AG04449 (cell line): ENCODE measurements at regions of chr16 and their contacts with region 1.

Region 1: GRCh38 chr16:67816240-67817031 is 9.7 kb downstream of the TSNAXIP1 start:
- DNase-seq: no peak
- H3K4me3 ChIP-seq: no peak overlapping the region
- CTCF ChIP-seq: peak; percentile 99

Region 2: GRCh38 chr16:67672739-67673662 is 143.4 kb before region 1 on chr16:
- CTCF ChIA-PET with region 1: interaction called, 28 read pairs
- POLR2A ChIA-PET with region 1: no interaction called
- DNase-seq: peak; percentile 14
- H3K4me3 ChIP-seq: no peak overlapping the region
- CTCF ChIP-seq: peak; percentile 72

Region 3: DNA sequence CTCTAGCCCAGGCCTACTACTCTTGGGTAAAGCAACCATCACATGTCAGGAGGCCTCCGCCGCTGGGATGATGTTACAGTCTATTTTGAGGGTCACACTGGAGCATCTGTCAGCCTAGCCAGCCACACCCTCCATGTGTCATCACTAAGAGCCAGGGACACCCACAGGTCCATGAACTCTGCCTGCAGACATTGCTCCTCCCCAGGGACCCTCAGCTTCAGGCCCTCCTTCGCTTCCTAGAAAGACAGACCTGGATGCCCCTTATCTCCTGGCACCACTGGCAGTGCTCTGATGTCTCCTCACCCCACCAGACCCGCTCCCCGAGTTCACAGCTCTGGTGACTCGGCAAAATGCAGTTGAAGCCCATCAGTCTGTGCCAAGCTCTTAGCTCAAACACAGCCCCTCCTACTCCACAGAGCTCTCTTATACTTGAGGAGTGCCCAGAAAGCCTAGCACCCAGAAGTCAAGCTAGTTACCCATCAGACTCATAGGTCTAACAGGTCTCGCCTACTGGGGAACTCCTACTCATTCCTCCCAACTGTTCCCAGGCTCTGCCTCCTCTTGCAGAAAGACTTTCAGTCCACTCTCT is 16.0 kb before region 1 on chr16:
- CTCF ChIA-PET with region 1: interaction called, 21 read pairs
- POLR2A ChIA-PET with region 1: no interaction called
- DNase-seq: no peak
- H3K4me3 ChIP-seq: no peak overlapping the region
- CTCF ChIP-seq: no peak

Region 4: GRCh38 chr16:67865316-67865715 is 48.9 kb after region 1 on chr16:
- CTCF ChIA-PET with region 1: interaction called, 61 read pairs
- POLR2A ChIA-PET with region 1: no interaction called
- DNase-seq: no peak
- H3K4me3 ChIP-seq: no peak overlapping the region
- CTCF ChIP-seq: peak; percentile 49

Region 5: DNA sequence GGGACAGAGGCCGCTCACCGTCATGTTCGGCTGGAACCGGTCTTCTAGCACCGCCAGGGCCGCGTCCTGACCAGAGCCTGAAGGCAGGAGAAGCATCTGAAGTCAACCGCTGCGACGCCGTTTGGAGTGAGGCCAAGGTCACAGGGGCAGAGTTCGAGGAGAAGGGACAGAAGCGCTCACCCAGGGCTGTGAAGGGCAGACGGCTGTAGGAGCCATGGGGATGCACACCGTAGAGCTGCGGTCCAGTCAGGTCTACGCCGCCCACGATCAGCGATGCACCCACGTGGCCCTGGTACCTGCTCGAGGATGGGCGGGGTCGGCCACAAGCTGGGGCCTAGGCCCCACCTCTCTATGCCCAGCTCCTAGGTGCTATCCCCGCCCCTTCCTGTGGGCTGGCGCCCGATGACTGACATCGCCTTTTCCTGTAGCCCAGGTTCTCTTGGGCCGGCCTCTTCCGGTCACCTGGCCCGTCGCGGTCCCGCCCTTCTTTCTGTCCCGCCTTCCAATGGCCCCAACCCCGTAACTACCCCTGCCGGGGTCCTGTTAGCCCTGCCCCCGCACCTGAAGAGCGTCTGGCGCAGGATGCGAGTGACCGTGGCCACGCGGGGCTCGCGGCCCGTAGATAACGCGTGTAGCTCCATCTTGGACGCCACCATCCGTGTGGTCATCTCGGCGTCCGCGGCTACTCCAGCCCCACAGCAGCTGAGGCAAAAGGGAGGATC is 119.1 kb after region 1 on chr16:
- CTCF ChIA-PET with region 1: interaction called, 227 read pairs
- POLR2A ChIA-PET with region 1: interaction called, 3 read pairs
- DNase-seq: peak; percentile 56
- H3K4me3 ChIP-seq: peak overlapping the region; percentile 100
- CTCF ChIP-seq: no peak